ENCODE measurements at regions of chr15 and their contacts with region 1.

Region 1: GRCh38 chr15:89017370-89018066 is 70.7 kb upstream of the ABHD2 start:
- DNase-seq: peak; percentile 90
- H3K4me3 Mint-ChIP-seq: peak overlapping the region; percentile 43
- H3K27ac Mint-ChIP-seq: no peak overlapping the region
- H3K4me1 Mint-ChIP-seq: peaks cover 15% of the 10 kb centered on the region
- H3K27me3 Mint-ChIP-seq: peaks cover 2% of the 10 kb centered on the region

Region 2: GRCh38 chr15:88657326-88658069 is 360.0 kb before region 1 on chr15:
- CTCF ChIA-PET with region 1: no interaction called
- POLR2A ChIA-PET with region 1: no interaction called
- intact Hi-C with region 1: no loop called
- DNase-seq: no peak
- H3K4me3 Mint-ChIP-seq: no peak overlapping the region
- H3K27ac Mint-ChIP-seq: peak overlapping the region; percentile 10
- H3K4me1 Mint-ChIP-seq: peaks cover 56% of the 10 kb centered on the region
- H3K27me3 Mint-ChIP-seq: no peaks in the 10 kb centered on the region

Region 3: DNA sequence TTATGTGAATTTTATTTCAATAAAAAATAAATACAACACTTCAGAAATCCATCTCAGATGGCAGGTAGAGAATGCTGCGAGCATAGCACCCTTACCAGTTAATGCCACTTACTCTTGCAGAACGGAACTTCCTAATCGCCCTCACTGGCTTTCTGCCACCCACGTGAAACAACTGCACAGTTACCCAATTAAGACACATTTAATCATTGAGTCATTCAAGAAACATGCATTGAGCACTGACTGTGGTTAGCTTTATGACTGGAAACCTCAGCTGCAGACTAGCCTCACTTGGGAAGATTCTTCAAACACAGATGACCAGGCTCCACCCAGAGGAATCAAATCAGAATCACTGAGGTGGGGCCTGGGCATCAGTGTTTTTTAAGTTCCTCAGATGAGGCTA is 98.8 kb before region 1 on chr15:
- CTCF ChIA-PET with region 1: no interaction called
- POLR2A ChIA-PET with region 1: no interaction called
- intact Hi-C with region 1: loop called (anchors 1 kb)
- DNase-seq: peak; percentile 83
- H3K4me3 Mint-ChIP-seq: no peak overlapping the region
- H3K27ac Mint-ChIP-seq: no peak overlapping the region
- H3K4me1 Mint-ChIP-seq: peaks cover 29% of the 10 kb centered on the region
- H3K27me3 Mint-ChIP-seq: peaks cover 17% of the 10 kb centered on the region

Region 4: GRCh38 chr15:88954431-88955277 is 62.9 kb before region 1 on chr15:
- CTCF ChIA-PET with region 1: no interaction called
- POLR2A ChIA-PET with region 1: no interaction called
- intact Hi-C with region 1: no loop called
- DNase-seq: no peak
- H3K4me3 Mint-ChIP-seq: no peak overlapping the region
- H3K27ac Mint-ChIP-seq: no peak overlapping the region
- H3K4me1 Mint-ChIP-seq: no peaks in the 10 kb centered on the region
- H3K27me3 Mint-ChIP-seq: peaks cover 5% of the 10 kb centered on the region

Region 5: DNA sequence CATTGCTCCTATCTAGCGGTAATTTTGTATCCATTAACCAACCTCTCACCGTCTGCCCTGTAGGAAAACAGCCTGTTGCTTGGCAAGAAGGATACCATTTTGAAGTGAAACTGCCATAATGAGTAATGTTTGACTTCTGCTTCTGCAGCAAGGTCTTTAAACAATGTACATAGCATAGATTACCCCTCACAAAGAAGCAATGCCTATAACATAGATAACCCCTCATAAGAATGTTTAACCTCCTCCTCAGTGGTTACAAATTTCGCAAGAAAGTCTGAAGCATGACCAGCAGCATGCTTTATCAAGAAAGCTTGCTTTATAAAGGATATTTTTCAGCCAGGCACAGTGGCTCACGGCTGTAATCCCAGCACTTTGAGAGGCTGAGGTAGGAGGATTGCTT is 43.1 kb before region 1 on chr15:
- CTCF ChIA-PET with region 1: no interaction called
- POLR2A ChIA-PET with region 1: no interaction called
- intact Hi-C with region 1: no loop called
- DNase-seq: no peak
- H3K4me3 Mint-ChIP-seq: no peak overlapping the region
- H3K27ac Mint-ChIP-seq: no peak overlapping the region
- H3K4me1 Mint-ChIP-seq: no peaks in the 10 kb centered on the region
- H3K27me3 Mint-ChIP-seq: peaks cover 7% of the 10 kb centered on the region